Activated naive CD4-positive, alpha-beta T cell treated with anti-CD3 and anti-CD28 coated beads for 36 hours (primary cell): ENCODE measurements at regions of chr2 and their contacts with region 1.

Region 1: GRCh38 chr2:213885485-213885884 is 525.4 kb upstream of the VWC2L start:
- DNase-seq: no peak
- H3K4me3 Mint-ChIP-seq: no peak overlapping the region
- H3K27ac Mint-ChIP-seq: no peak overlapping the region
- H3K4me1 Mint-ChIP-seq: no peaks in the 10 kb centered on the region
- H3K27me3 Mint-ChIP-seq: peaks cover 2% of the 10 kb centered on the region

Region 2: DNA sequence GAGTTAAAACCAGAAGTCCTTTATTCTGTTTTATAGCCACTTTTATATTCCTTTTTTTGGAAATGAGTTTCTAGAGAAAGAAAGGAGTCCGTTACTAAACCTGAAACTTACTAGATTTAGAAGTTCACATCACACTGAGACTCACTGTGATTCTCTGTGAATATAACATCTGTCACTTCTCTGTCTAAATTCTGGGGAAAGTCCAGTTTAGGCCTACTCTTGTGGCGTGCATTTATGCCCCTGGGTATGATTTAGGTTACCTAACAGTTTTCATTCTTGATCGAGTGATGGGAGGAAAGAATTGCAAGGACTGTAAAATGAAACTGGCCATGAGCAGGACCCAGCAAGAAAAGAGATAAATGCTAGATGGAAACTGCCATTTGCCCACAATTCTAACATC is 151.6 kb before region 1 on chr2:
- CTCF ChIA-PET with region 1: interaction called, 11 read pairs
- intact Hi-C with region 1: no loop called
- DNase-seq: no peak
- H3K4me3 Mint-ChIP-seq: no peak overlapping the region
- H3K27ac Mint-ChIP-seq: no peak overlapping the region
- H3K4me1 Mint-ChIP-seq: no peaks in the 10 kb centered on the region
- H3K27me3 Mint-ChIP-seq: no peaks in the 10 kb centered on the region

Region 3: DNA sequence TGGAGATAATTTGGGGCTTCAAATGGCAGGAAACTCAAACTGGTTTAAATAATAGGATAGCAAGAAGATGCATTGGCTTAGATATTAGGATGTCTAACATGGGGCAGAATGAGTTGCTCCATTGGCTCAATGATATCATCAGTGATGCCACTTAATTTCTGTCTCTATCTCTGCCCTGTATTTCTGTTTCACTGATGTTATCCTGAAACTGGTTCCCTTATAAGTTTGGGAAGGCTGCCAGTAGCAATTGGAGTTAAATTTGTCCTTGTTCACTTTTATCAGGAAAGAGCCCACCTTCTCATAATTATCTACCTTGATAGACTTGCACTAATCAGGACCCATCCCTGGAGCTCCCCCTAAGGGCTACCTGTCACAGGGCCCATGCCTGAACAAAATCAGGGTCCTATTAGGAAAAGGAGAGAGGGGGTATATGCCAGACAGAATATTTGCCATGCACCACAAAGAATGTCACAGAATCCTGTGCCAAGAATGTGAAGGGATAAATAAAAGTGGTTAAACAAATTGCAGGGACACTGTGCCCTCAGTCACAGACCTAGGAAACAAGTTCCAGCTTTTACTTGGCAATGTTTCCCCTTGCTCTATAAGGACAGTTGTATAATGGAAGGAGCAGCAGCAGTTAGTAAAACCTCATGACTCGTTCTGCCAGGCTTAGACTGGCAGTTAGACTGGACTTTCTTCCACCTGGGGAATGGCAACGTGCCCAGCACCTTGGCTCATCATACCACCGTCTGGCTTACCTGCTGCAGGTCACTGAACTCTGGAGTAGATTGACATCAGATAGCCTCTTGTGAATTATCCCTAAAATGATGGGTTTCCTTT is 493.0 kb after region 1 on chr2:
- CTCF ChIA-PET with region 1: no interaction called
- intact Hi-C with region 1: no loop called
- DNase-seq: no peak
- H3K4me3 Mint-ChIP-seq: no peak overlapping the region
- H3K27ac Mint-ChIP-seq: no peak overlapping the region
- H3K4me1 Mint-ChIP-seq: no peaks in the 10 kb centered on the region
- H3K27me3 Mint-ChIP-seq: no peaks in the 10 kb centered on the region